ENCODE measurements at regions of chr19 and their contacts with region 1.

Region 1: GRCh38 chr19:1355568-1356507 is 27.9 kb upstream of the NDUFS7 start:
- DNase-seq: no peak
- ATAC-seq: no peak
- H3K4me3 ChIP-seq: peak overlapping the region; percentile 65 to 80 (median 74)
- H3K27ac ChIP-seq: peak overlapping the region; percentile 82 to 97 (median 90)
- H3K4me1 ChIP-seq: peaks cover 15 to 25% of the 10 kb centered on the region in 2 donors
- H3K27me3 ChIP-seq: no peaks in the 10 kb centered on the region
- CTCF ChIP-seq: no peak
- POLR2A ChIP-seq: no peak

Region 2: GRCh38 chr19:1401138-1401888 is 45.5 kb after region 1 on chr19 and contains the start of gene GAMT:
- in situ Hi-C with region 1: no loop called
- intact Hi-C with region 1: loop called (anchors 5 kb)
- DNase-seq: no peak
- ATAC-seq: peak; percentile 37 to 40
- H3K4me3 ChIP-seq: peak within 1 kb of the TSS; percentile 60 to 90 (median 63)
- H3K27ac ChIP-seq: peak within 1 kb of the TSS; percentile 88 to 99 (median 91)
- H3K4me1 ChIP-seq: peaks cover 11 to 14% of the 10 kb centered on the region in 2 donors
- H3K27me3 ChIP-seq: no peaks in the 10 kb centered on the region
- CTCF ChIP-seq: peak; percentile 34 to 66 (median 46)
- POLR2A ChIP-seq: no peak
- total RNA-seq, gene GAMT: 269 to 421 (median 373) TPM